Naive thymus-derived CD8-positive, alpha-beta T cell (primary cell): ENCODE measurements at regions of chr19 and their contacts with region 1.

Region 1: DNA sequence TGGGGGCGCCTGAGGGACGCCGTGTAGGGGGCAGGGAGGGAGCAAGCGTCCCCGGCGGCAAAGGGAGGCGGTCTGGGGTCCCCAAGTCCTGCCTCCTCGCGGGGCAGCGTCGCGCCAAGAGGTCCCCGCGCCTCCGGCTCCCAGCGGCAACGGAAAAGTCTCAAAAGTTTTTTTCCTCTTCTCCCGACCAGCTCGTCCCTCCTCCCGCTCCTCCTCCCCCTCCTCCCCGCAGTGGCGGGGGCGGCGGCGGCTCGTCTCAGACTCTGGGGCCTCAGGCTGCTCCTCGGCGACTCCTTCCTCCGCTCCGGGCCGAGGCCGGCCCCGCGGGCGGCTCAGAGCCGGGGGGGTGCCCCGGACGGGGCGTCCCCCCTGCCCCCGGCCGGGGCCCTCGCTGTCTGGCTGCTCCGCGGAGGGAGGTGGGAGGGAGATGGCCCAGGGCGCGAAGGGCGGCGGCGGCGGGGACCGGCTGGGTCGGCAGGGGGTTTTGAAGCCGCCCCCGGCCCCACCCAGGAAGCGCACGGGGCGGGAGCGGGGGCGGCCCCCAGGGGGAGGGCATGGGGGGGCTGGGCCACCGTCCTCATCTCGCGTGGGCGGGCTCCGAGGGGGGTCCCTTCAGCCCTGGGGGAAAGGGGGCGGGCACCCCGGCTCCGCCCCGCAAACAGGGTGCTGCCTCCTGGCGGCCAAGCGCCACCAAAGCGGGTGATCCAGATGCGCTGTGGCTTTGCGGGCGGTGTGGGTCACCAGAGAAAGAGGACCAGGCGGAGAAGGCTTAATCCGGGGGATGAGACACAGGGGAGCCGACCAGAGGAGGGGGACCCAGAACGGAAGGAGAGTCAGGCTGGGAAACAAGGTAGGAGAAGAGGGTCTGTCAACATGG is at the start of gene TGFB1:
- DNase-seq: peak; percentile 93 to 97 (median 95)
- ATAC-seq: peak; percentile 55 to 57
- H3K4me3 Mint-ChIP-seq: peak within 1 kb of the TSS; percentile 92 to 100 (median 99)
- H3K27ac Mint-ChIP-seq: peak within 1 kb of the TSS; percentile 94 to 99 (median 98)
- H3K4me1 Mint-ChIP-seq: peaks cover 45 to 83% (median 69%) of the 10 kb centered on the region in 4 donors
- H3K27me3 Mint-ChIP-seq: no peaks in the 10 kb centered on the region
- polyA plus RNA-seq, gene TGFB1: 30.5 to 45.4 (median 34.5) TPM

Region 2: GRCh38 chr19:41226053-41226873 is 127.4 kb before region 1 on chr19:
- POLR2A ChIA-PET with region 1: no interaction called
- DNase-seq: peak in 8 of 10 donors; percentile 8 to 68 (median 32)
- ATAC-seq: peak; percentile 70 to 77
- H3K4me3 Mint-ChIP-seq: peak overlapping the region; percentile 75 to 92 (median 86)
- H3K27ac Mint-ChIP-seq: peak overlapping the region; percentile 62 to 95 (median 84)
- H3K4me1 Mint-ChIP-seq: peaks cover 14 to 22% (median 16%) of the 10 kb centered on the region in 4 donors
- H3K27me3 Mint-ChIP-seq: peaks cover 5 to 30% (median 13%) of the 10 kb centered on the region in 5 donors

Region 3: GRCh38 chr19:41310033-41310758 is 43.5 kb before region 1 on chr19 and contains the start of gene CCDC97:
- POLR2A ChIA-PET with region 1: interaction called, 180 read pairs
- DNase-seq: peak; percentile 82 to 97 (median 90)
- ATAC-seq: peak; percentile 67 to 69
- H3K4me3 Mint-ChIP-seq: peak within 1 kb of the TSS; percentile 93 to 99 (median 97)
- H3K27ac Mint-ChIP-seq: peak within 1 kb of the TSS; percentile 94 to 100 (median 99)
- H3K4me1 Mint-ChIP-seq: peaks cover 34 to 86% (median 82%) of the 10 kb centered on the region in 4 donors
- H3K27me3 Mint-ChIP-seq: peaks cover 0 to 3% (median 0%) of the 10 kb centered on the region in 5 donors
- polyA plus RNA-seq, gene CCDC97: 15.6 to 25.0 (median 24.6) TPM

Region 4: DNA sequence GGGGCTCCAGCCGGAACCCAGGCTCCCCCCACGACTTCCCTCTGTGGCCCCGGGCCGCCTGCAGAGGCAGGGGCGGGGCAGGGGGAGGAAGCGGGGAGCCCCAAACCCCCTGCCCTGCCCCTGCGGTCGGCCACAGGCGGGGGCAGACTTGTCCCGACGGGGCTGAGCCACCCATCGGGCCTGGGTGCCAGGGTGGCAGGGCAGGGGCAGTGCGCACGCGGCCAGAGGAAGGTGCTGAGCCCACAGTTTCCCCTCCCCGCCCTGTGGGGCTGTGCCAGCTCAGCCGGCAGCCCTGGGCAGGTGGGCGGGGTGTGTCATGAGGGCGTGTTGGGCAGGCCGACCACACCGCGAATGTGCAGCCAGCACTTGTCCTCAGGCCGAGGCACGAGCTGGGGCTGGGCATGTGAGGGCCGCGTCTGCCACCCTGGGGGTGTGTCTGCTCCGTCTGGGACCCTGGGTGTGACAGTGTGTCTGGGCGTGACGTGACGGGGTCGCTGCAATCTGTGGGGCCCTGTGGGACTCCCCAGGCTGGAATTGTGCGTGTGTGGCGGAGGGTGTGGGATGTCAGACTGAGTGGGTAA is 26.0 kb before region 1 on chr19:
- POLR2A ChIA-PET with region 1: interaction called, 71 read pairs
- DNase-seq: peak; percentile 60 to 90 (median 74)
- ATAC-seq: peak; percentile 62 to 75
- H3K4me3 Mint-ChIP-seq: peak overlapping the region; percentile 75 to 88 (median 82)
- H3K27ac Mint-ChIP-seq: peak overlapping the region; percentile 93 to 99 (median 98)
- H3K4me1 Mint-ChIP-seq: peaks cover 54 to 89% (median 75%) of the 10 kb centered on the region in 4 donors
- H3K27me3 Mint-ChIP-seq: peaks cover 0 to 2% (median 0%) of the 10 kb centered on the region in 5 donors

Region 5: DNA sequence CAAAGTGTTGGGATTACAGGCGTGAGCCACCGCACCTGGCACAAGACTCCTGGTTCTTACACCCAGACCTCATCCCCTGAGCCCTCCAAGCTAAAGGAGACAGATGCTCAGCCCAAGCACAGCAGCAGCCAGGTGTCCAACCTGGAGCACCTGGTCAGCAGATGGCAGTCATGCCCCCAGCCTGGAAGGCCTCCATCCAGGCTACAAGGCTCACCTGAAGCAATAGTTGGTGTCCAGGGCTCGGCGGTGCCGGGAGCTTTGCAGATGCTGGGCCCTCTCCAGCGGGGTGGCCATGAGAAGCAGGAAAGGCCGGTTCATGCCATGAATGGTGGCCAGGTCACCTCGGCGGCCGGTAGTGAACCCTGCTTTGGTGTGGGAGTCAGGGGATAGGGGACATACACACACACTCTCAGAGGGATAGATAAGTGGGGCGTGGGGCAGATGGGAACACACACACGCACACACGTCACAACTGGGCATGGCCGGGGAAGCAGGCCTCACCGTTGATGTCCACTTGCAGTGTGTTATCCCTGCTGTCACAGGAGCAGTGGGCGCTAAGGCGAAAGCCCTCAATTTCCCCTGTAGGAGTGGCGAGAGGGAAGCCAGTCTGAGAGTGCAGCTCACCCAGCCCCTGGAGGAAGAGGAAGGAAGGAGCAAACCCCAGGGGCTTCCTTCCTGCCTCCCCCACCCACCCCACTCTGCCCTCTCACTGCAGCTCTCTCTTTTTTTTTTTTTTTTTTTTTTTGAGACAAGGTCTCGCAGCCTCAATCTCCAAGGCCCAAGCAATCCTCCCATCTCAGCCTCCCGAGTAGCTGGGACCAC is 11.8 kb before region 1 on chr19:
- POLR2A ChIA-PET with region 1: interaction called, 25 read pairs
- DNase-seq: peak in 1 of 10 donors; percentile 28
- ATAC-seq: peak; percentile 64 to 77
- H3K4me3 Mint-ChIP-seq: peak overlapping the region; percentile 7 to 77 (median 62)
- H3K27ac Mint-ChIP-seq: peak overlapping the region; percentile 47 to 86 (median 80)
- H3K4me1 Mint-ChIP-seq: peaks cover 19 to 69% (median 54%) of the 10 kb centered on the region in 4 donors
- H3K27me3 Mint-ChIP-seq: no peaks in the 10 kb centered on the region

Region 6: GRCh38 chr19:41376241-41376997 is 22.7 kb after region 1 on chr19 and contains the start of gene TMEM91:
- POLR2A ChIA-PET with region 1: interaction called, 11 read pairs
- DNase-seq: peak in 2 of 10 donors; percentile 24
- ATAC-seq: peak; percentile 18 to 55
- H3K4me3 Mint-ChIP-seq: peak within 1 kb of the TSS; percentile 59 to 94 (median 87)
- H3K27ac Mint-ChIP-seq: peak within 1 kb of the TSS; percentile 72 to 91 (median 88)
- H3K4me1 Mint-ChIP-seq: peaks cover 17 to 29% (median 28%) of the 10 kb centered on the region in 4 donors
- H3K27me3 Mint-ChIP-seq: no peaks in the 10 kb centered on the region
- polyA plus RNA-seq, gene TMEM91: 3.6 to 8.3 (median 5.0) TPM